Mammary epithelial cell (primary cell): ENCODE measurements at regions of chr1 and their contacts with region 1.

Region 1: DNA sequence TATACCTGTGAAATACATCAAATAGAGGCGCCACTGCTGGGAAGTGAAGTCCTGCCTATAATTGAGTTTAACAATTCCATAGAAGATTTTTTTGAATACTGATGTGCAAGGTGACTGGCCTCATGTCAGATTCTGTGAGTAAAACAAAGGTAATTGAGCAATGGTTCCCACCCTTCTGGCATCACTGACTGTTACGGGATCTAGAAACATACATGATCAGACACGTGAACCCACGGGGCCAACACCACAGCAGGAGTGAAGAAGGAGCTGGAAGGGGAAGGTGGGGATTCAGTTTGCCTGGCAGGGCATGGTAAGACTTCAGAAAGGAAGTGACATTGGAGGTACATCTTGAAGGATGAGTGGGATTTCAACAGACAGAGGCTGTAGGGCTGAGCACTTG is 270.2 kb downstream of the DISC1 start:
- DNase-seq: peak; percentile 11
- H3K4me3 ChIP-seq: no peak overlapping the region
- H3K27ac ChIP-seq: no peak overlapping the region
- H3K4me1 ChIP-seq: no peaks in the 10 kb centered on the region
- H3K27me3 ChIP-seq: no peaks in the 10 kb centered on the region
- CTCF ChIP-seq: no peak

Region 2: DNA sequence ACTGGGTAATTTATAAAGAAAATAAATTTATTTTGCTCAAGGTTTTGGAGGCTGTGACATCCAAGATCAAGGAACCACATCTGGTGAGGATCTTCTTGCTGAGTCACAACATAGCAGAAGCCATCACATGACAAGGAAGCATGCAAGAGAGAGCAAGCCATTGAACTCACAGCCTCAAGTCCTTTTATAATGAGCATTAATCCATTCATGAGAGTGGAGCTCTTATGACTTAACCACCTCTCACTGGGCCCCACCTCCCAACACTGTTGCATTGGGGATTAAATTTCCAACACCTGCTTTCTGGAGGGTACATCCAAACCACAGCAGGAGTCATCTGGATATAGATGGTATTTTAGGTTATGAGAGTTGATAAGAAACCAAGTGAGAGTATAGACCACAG is 454.1 kb before region 1 on chr1:
- CTCF ChIA-PET with region 1: no interaction called
- dilution Hi-C with region 1: no loop called
- in situ Hi-C with region 1: no loop called
- intact Hi-C with region 1: no loop called
- DNase-seq: no peak
- H3K4me3 ChIP-seq: no peak overlapping the region
- H3K27ac ChIP-seq: no peak overlapping the region
- H3K4me1 ChIP-seq: no peaks in the 10 kb centered on the region
- H3K27me3 ChIP-seq: no peaks in the 10 kb centered on the region
- CTCF ChIP-seq: no peak

Region 3: GRCh38 chr1:231612393-231613089 is 284.3 kb before region 1 on chr1:
- CTCF ChIA-PET with region 1: no interaction called
- dilution Hi-C with region 1: no loop called
- in situ Hi-C with region 1: no loop called
- intact Hi-C with region 1: no loop called
- DNase-seq: no peak
- H3K4me3 ChIP-seq: no peak overlapping the region
- H3K27ac ChIP-seq: no peak overlapping the region
- H3K4me1 ChIP-seq: no peaks in the 10 kb centered on the region
- H3K27me3 ChIP-seq: no peaks in the 10 kb centered on the region
- CTCF ChIP-seq: no peak

Region 4: DNA sequence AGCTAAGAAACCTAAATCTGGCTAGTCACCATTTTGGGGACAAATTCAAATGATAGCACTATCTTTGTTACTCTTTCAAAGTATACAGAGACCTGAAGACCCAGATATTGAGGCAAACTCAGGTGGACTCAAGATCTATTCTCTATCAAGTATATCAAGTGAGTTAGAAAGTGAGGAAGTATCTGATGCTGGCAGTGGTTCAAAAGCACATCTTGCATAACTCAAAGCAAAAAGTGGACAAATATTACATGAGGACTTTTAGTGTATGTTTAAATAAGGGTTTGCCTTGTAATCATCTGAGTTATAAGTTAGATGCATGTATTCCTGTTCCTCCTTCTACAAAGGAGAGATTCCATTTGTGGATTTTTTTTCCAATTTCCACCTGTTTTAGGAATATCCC is 68.2 kb after region 1 on chr1:
- CTCF ChIA-PET with region 1: interaction called, 10 read pairs
- dilution Hi-C with region 1: loop called (anchors 5 kb)
- in situ Hi-C with region 1: no loop called
- intact Hi-C with region 1: no loop called
- DNase-seq: no peak
- H3K4me3 ChIP-seq: no peak overlapping the region
- H3K27ac ChIP-seq: no peak overlapping the region
- H3K4me1 ChIP-seq: no peaks in the 10 kb centered on the region
- H3K27me3 ChIP-seq: peaks cover 2% of the 10 kb centered on the region
- CTCF ChIP-seq: no peak

Region 5: GRCh38 chr1:231971397-231972104 is 74.7 kb after region 1 on chr1:
- CTCF ChIA-PET with region 1: interaction called, 10 read pairs
- dilution Hi-C with region 1: no loop called
- in situ Hi-C with region 1: no loop called
- intact Hi-C with region 1: no loop called
- DNase-seq: peak; percentile 45
- H3K4me3 ChIP-seq: no peak overlapping the region
- H3K27ac ChIP-seq: no peak overlapping the region
- H3K4me1 ChIP-seq: no peaks in the 10 kb centered on the region
- H3K27me3 ChIP-seq: peaks cover 2% of the 10 kb centered on the region
- CTCF ChIP-seq: no peak